ENCODE measurements at regions of chr2 and their contacts with region 1.

Region 1: GRCh38 chr2:101566632-101567228 is 91.8 kb upstream of the RFX8 start:
- DNase-seq: peak; percentile 96 to 97
- H3K4me3 ChIP-seq: no peak overlapping the region
- H3K4me3 Mint-ChIP-seq: peak overlapping the region; percentile 25
- H3K27ac Mint-ChIP-seq: peak overlapping the region; percentile 70
- H3K4me1 ChIP-seq: peaks cover 50% of the 10 kb centered on the region
- H3K4me1 Mint-ChIP-seq: peaks cover 68% of the 10 kb centered on the region
- H3K27me3 ChIP-seq: no peaks in the 10 kb centered on the region
- H3K27me3 Mint-ChIP-seq: no peaks in the 10 kb centered on the region
- CTCF ChIP-seq: no peak

Region 2: GRCh38 chr2:101341901-101342624 is 224.7 kb before region 1 on chr2:
- CTCF ChIA-PET with region 1: no interaction called
- POLR2A ChIA-PET with region 1: no interaction called
- intact Hi-C with region 1: loop called (anchors 5 kb)
- DNase-seq: peak; percentile 86 to 92
- H3K4me3 ChIP-seq: no peak overlapping the region
- H3K4me3 Mint-ChIP-seq: no peak overlapping the region
- H3K27ac Mint-ChIP-seq: peak overlapping the region; percentile 37
- H3K4me1 ChIP-seq: peaks cover 57% of the 10 kb centered on the region
- H3K4me1 Mint-ChIP-seq: peaks cover 49% of the 10 kb centered on the region
- H3K27me3 ChIP-seq: no peaks in the 10 kb centered on the region
- H3K27me3 Mint-ChIP-seq: no peaks in the 10 kb centered on the region
- CTCF ChIP-seq: peak; percentile 88 to 93

Region 3: GRCh38 chr2:101420623-101421022 is 146.1 kb before region 1 on chr2:
- CTCF ChIA-PET with region 1: no interaction called
- POLR2A ChIA-PET with region 1: no interaction called
- intact Hi-C with region 1: no loop called
- DNase-seq: no peak
- H3K4me3 ChIP-seq: no peak overlapping the region
- H3K4me3 Mint-ChIP-seq: no peak overlapping the region
- H3K27ac Mint-ChIP-seq: no peak overlapping the region
- H3K4me1 ChIP-seq: no peaks in the 10 kb centered on the region
- H3K4me1 Mint-ChIP-seq: no peaks in the 10 kb centered on the region
- H3K27me3 ChIP-seq: no peaks in the 10 kb centered on the region
- H3K27me3 Mint-ChIP-seq: no peaks in the 10 kb centered on the region
- CTCF ChIP-seq: no peak

Region 4: GRCh38 chr2:101518578-101519492 is 47.9 kb before region 1 on chr2:
- CTCF ChIA-PET with region 1: no interaction called
- POLR2A ChIA-PET with region 1: no interaction called
- intact Hi-C with region 1: loop called (anchors 1 kb)
- DNase-seq: peak; percentile 75 to 77
- H3K4me3 ChIP-seq: peak overlapping the region; percentile 20
- H3K4me3 Mint-ChIP-seq: peak overlapping the region; percentile 38
- H3K27ac Mint-ChIP-seq: no peak overlapping the region
- H3K4me1 ChIP-seq: peaks cover 23% of the 10 kb centered on the region; the same call in 1 of the 2 replicates
- H3K4me1 Mint-ChIP-seq: peaks cover 22% of the 10 kb centered on the region
- H3K27me3 ChIP-seq: no peaks in the 10 kb centered on the region
- H3K27me3 Mint-ChIP-seq: no peaks in the 10 kb centered on the region
- CTCF ChIP-seq: peak; percentile 66 to 80

Region 5: DNA sequence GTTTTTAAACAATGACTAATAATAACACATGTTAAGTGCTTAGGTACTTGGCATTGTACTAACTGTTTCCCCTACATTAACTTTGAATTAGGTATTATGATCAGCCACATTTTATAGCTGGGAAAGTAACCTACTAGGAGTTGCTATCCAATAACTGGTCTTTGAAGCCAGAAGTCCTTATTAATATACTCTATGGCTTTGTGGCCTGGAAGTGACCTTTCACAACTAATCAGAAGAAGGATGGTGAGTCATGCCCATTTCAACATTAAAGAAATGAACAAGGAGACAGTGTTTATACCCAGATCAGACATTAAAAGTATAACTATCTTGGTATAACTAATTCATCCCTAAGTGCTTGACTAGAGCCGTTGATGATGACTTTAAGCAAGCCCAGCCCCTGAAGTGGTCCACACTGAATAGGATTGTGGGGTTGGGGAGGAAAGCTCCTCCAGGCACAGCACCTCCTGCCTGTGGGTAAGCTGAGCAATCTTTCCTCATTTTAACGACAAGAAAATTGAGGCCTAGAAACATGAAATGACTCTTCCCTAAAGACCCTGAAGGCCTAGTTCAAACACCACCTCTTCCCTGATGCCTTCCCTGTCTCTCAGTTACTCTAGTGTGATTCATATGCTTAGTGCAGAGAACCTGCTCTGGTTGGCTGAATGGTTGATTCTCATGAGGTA is 20.2 kb before region 1 on chr2:
- CTCF ChIA-PET with region 1: no interaction called
- POLR2A ChIA-PET with region 1: no interaction called
- intact Hi-C with region 1: no loop called
- DNase-seq: no peak
- H3K4me3 ChIP-seq: no peak overlapping the region
- H3K4me3 Mint-ChIP-seq: no peak overlapping the region
- H3K27ac Mint-ChIP-seq: no peak overlapping the region
- H3K4me1 ChIP-seq: no peaks in the 10 kb centered on the region
- H3K4me1 Mint-ChIP-seq: peaks cover 4% of the 10 kb centered on the region
- H3K27me3 ChIP-seq: no peaks in the 10 kb centered on the region
- H3K27me3 Mint-ChIP-seq: no peaks in the 10 kb centered on the region
- CTCF ChIP-seq: no peak

Region 6: DNA sequence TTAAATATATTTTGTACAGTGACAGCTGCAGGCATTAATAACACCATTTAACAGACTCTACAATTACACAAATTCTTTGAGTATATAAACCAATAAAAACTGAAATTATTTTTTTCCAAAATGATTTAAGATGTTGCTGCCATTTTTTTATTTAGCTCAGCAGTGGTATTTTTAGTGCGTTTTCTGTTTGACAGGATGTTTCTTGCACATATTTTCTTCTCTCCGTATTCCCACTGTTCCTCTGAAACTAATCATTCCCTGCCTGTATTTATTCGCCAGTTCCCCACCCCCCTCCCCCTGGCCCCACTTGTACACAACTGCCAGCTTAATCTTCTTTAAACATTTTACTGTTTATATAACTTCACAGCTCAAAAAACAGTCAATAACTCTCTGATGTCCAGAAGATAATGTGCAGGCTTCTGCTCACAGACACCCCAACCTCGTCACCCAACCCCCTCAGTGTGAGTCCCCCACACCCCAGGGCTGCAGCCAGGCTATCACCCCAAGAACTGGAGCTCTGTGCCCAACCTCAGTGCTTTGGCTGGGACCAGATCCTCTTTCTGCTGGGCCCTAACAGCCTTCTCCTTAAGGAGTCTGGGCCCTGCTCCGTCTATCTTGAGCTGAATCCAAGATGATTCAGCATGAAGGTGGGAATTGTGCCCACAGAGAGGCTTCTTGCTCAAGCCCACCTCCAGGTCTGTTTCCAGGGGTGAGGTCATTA is 89.1 kb after region 1 on chr2:
- CTCF ChIA-PET with region 1: interaction called, 3 read pairs
- POLR2A ChIA-PET with region 1: no interaction called
- intact Hi-C with region 1: loop called (anchors 5 kb)
- DNase-seq: peak in 1 of 2 experiments; percentile 13
- H3K4me3 ChIP-seq: no peak overlapping the region
- H3K4me3 Mint-ChIP-seq: peak overlapping the region; percentile 49
- H3K27ac Mint-ChIP-seq: peak overlapping the region; percentile 18
- H3K4me1 ChIP-seq: peaks cover 14% of the 10 kb centered on the region; the same call in 1 of the 2 replicates
- H3K4me1 Mint-ChIP-seq: peaks cover 25% of the 10 kb centered on the region
- H3K27me3 ChIP-seq: no peaks in the 10 kb centered on the region
- H3K27me3 Mint-ChIP-seq: no peaks in the 10 kb centered on the region
- CTCF ChIP-seq: no peak

Region 7: DNA sequence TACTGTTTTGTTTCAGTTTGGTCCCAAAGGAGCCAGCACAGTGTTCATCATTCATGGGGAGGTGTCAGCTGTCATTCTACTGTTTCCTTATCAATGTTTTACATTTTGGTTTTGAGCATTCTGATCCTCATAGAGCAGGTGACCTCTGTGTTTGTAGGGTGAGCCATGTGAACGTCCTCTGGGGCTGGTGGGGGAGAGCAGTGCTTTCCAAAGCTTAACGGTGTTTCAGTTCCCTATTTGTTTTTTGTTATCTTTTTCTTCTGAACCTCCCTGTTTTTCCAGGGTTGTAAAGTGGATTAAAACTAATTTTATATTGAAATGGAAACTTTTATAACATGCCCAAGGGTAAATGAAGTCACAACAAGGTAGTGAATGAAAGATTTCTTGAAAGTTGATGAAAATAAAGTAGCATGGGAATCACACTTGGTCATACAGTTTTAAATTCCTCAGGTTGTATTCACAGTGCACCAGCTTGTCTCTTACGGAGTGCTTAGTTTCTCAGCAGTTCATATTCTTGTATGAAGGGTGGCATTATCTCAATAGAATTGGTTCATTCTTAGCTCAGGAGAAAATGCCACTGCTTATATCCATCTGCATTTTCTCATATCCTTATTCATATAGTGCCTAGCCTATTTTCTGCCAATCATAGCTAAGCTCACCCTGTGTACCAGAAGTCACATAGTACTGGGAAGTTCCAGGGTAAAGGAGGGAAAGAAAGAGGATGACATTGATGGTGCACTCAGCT is 185.3 kb after region 1 on chr2:
- CTCF ChIA-PET with region 1: no interaction called
- POLR2A ChIA-PET with region 1: no interaction called
- intact Hi-C with region 1: loop called (anchors 5 kb)
- DNase-seq: no peak
- H3K4me3 ChIP-seq: no peak overlapping the region
- H3K4me3 Mint-ChIP-seq: no peak overlapping the region
- H3K27ac Mint-ChIP-seq: peak overlapping the region; percentile 46
- H3K4me1 ChIP-seq: peaks cover 69% of the 10 kb centered on the region
- H3K4me1 Mint-ChIP-seq: peaks cover 46% of the 10 kb centered on the region
- H3K27me3 ChIP-seq: no peaks in the 10 kb centered on the region
- H3K27me3 Mint-ChIP-seq: no peaks in the 10 kb centered on the region
- CTCF ChIP-seq: no peak

Region 8: GRCh38 chr2:101831351-101831865 is 264.7 kb after region 1 on chr2:
- CTCF ChIA-PET with region 1: interaction called, 3 read pairs
- POLR2A ChIA-PET with region 1: no interaction called
- intact Hi-C with region 1: loop called (anchors 1 kb)
- DNase-seq: peak; percentile 80
- H3K4me3 ChIP-seq: no peak overlapping the region
- H3K4me3 Mint-ChIP-seq: no peak overlapping the region
- H3K27ac Mint-ChIP-seq: peak overlapping the region; percentile 66
- H3K4me1 ChIP-seq: peaks cover 33% of the 10 kb centered on the region
- H3K4me1 Mint-ChIP-seq: peaks cover 41% of the 10 kb centered on the region
- H3K27me3 ChIP-seq: no peaks in the 10 kb centered on the region
- H3K27me3 Mint-ChIP-seq: no peaks in the 10 kb centered on the region
- CTCF ChIP-seq: peak; percentile 64 to 90